ENCODE measurements at regions of chr7 and their contacts with region 1.

Region 1: GRCh38 chr7:992709-993607 is 10.0 kb downstream of the CYP2W1 start:
- DNase-seq: peak; percentile 87
- ATAC-seq: peak; percentile 91
- H3K4me3 ChIP-seq: no peak overlapping the region
- H3K27ac ChIP-seq: no peak overlapping the region
- H3K4me1 ChIP-seq: peaks cover 2 to 22% of the 10 kb centered on the region in 2 experiments; a peak in 2 of 4 replicates
- H3K27me3 ChIP-seq: no peaks in the 10 kb centered on the region
- CTCF ChIP-seq: peak; percentile 98 to 100 (median 99)
- POLR2A ChIP-seq: no peak
- RAD21 ChIP-seq: peak; percentile 99

Region 2: DNA sequence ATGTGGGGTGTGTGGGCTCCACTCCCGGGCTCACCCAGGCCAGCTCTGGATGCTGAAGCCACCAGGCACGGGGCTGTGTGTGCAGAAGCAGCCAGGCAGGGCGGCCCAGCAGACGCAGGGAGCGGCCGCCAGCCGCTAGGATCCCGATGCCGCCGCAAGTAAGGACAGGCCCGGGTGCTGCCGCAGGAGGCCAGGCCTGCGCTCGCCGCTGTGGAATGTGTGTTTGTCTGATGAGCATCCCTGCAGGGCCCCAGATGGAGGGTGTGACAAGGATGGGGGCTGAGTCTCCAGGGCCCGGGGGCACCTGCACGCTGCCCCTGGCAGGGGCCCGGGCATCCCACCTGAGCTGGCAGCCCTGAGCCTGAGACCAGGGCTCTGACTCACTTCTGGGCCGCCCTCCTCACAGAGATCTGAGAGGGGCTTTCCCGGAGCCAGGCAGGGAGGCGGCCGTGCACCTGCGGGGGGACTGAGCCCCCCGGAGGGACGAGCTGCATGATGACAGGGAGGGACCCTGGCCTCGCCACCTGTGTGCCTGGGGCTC is 601.5 kb before region 1 on chr7:
- CTCF ChIA-PET with region 1: no interaction called
- POLR2A ChIA-PET with region 1: no interaction called
- RAD21 ChIA-PET with region 1: no interaction called
- intact Hi-C with region 1: no loop called
- DNase-seq: no peak
- ATAC-seq: no peak
- H3K4me3 ChIP-seq: no peak overlapping the region
- H3K27ac ChIP-seq: no peak overlapping the region
- H3K4me1 ChIP-seq: no peaks in the 10 kb centered on the region
- H3K27me3 ChIP-seq: no peaks in the 10 kb centered on the region
- CTCF ChIP-seq: no peak
- POLR2A ChIP-seq: no peak
- RAD21 ChIP-seq: no peak

Region 3: GRCh38 chr7:974820-975681 is 17.9 kb before region 1 on chr7 and contains the start of gene COX19:
- CTCF ChIA-PET with region 1: interaction called, 12 read pairs
- POLR2A ChIA-PET with region 1: no interaction called
- RAD21 ChIA-PET with region 1: no interaction called
- intact Hi-C with region 1: no loop called
- DNase-seq: peak; percentile 67
- ATAC-seq: peak; percentile 90
- H3K4me3 ChIP-seq: peak within 1 kb of the TSS; percentile 97
- H3K27ac ChIP-seq: peak within 1 kb of the TSS; percentile 79
- H3K4me1 ChIP-seq: peaks cover 0 to 5% of the 10 kb centered on the region in 2 experiments; a peak in 2 of 4 replicates
- H3K27me3 ChIP-seq: no peaks in the 10 kb centered on the region
- CTCF ChIP-seq: no peak
- POLR2A ChIP-seq: no peak
- RAD21 ChIP-seq: no peak
- total RNA-seq, gene COX19: 14.0 TPM

Region 4: GRCh38 chr7:1065263-1066260 is 72.6 kb after region 1 on chr7:
- CTCF ChIA-PET with region 1: interaction called, 69 read pairs
- POLR2A ChIA-PET with region 1: no interaction called
- RAD21 ChIA-PET with region 1: interaction called, 11 read pairs
- intact Hi-C with region 1: loop called (anchors 1 kb)
- DNase-seq: no peak
- ATAC-seq: peak; percentile 98
- H3K4me3 ChIP-seq: no peak overlapping the region
- H3K27ac ChIP-seq: no peak overlapping the region; the same call in 1 of the 2 replicates
- H3K4me1 ChIP-seq: 0 out of 4 replicates have a peak, but pooled peaks cover 0 to 2% of the 10 kb centered on the region in 2 experiments
- H3K27me3 ChIP-seq: no peaks in the 10 kb centered on the region
- CTCF ChIP-seq: peak; percentile 78 to 98 (median 91)
- POLR2A ChIP-seq: no peak
- RAD21 ChIP-seq: peak; percentile 94

Region 5: DNA sequence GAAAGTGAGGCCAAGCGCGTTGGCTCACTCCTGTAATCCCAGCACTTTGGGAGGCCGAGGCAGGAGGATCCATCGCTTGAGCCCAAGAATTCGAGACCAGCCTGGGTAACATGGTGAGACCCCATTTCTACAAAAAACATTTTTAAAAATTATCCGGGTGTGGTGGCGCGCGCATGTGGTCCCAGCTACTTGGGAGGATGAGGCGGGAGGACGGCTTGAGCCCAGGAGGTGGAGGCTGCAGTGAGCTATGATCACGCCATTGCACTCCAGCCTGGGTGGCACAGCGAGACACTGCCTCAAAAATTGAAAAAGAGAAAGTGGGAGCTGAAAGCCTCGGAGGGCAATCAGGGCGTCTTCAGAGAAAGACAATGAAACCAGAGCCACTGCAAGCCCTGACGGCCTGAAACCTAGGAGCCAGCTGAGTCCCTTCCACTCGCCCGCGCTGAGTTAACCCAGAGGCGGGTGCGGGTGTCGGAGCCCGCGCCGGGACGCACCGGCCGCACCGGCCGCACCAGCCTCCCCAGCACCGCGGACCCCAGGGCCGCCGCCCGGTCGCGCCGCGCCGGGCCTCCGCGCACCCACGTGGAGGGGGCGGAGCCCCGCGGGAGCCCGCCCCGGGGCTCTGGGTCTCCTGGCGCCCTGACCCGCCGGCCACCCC is 144.7 kb after region 1 on chr7:
- CTCF ChIA-PET with region 1: interaction called, 5 read pairs
- POLR2A ChIA-PET with region 1: no interaction called
- RAD21 ChIA-PET with region 1: no interaction called
- intact Hi-C with region 1: loop called (anchors 5 kb)
- DNase-seq: no peak
- ATAC-seq: peak; percentile 74
- H3K4me3 ChIP-seq: peak overlapping the region; percentile 75 to 82
- H3K27ac ChIP-seq: peak overlapping the region; percentile 78
- H3K4me1 ChIP-seq: peaks cover 0 to 20% of the 10 kb centered on the region in 2 experiments; a peak in 2 of 4 replicates
- H3K27me3 ChIP-seq: no peaks in the 10 kb centered on the region
- CTCF ChIP-seq: no peak
- POLR2A ChIP-seq: no peak
- RAD21 ChIP-seq: no peak

Region 6: DNA sequence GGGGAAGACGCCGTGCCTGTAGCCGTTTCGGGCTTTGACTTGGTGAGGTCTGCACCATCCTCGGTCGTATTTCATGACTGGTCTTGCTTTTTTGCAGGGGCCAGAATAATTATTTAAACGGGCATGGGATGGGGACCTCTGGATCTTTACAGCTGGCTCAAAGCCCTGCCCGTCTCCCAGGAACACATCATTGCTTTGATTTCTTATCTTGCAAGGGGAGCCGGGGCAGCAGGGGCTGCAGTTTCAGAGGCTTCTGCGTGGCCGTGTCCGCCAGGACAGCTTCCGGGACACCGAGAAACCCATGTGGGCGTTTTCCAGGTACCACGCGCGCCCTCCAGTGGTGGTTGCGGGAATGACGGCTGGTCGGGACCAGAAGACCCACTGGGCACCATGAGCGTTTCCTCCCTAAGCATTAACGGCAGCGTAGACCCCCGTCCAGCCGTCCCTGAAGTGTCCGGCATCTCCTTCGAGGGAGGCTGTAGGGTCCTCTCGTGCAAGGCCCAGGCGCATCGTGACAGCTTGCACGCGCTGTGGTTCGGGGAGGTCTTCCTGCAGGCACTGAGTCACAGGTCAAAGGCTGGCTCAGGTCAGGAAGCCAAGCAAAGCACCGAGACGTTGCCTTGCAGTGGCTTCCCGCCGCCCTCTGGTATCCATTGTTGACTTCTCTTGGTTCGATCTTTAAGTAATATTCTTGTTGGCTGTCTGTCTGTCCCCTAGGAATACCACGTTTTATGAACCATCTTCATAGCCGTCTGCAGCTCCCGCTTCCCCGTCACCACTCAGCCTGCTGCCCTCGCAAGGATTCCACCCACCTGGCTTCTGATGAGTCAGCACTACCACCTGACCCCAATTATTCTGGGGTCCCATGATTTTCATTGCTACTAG is 183.3 kb after region 1 on chr7:
- CTCF ChIA-PET with region 1: interaction called, 31 read pairs
- POLR2A ChIA-PET with region 1: no interaction called
- RAD21 ChIA-PET with region 1: interaction called in 1 of 2 experiments, 8 read pairs
- intact Hi-C with region 1: loop called (anchors 1 kb)
- DNase-seq: peak; percentile 56
- ATAC-seq: peak; percentile 78
- H3K4me3 ChIP-seq: peak overlapping the region; percentile 39 to 56
- H3K27ac ChIP-seq: peak overlapping the region; percentile 41
- H3K4me1 ChIP-seq: peaks cover 10 to 18% of the 10 kb centered on the region in 2 experiments
- H3K27me3 ChIP-seq: no peaks in the 10 kb centered on the region
- CTCF ChIP-seq: peak; percentile 89 to 92 (median 92)
- POLR2A ChIP-seq: no peak
- RAD21 ChIP-seq: peak; percentile 81

Region 7: DNA sequence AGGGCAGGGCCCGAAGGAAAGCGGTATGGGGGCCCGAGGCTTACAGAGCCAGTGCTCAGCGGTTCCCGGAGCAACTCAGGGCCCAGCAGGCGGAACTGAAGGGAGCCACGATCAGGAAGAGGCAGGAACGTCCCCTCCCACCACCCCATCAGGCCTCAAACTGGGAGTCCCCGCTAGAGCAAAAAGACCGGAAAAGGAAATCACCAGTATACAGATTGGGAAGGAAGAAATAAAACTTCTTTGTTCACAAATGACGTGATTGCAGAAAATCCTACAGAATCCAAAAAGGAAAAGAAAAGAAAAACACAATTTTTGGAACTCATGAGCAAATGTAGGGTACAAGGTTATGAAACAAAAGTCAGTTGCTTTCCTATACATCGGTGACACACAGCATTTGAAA is 188.7 kb after region 1 on chr7:
- CTCF ChIA-PET with region 1: interaction called, 31 read pairs
- POLR2A ChIA-PET with region 1: no interaction called
- RAD21 ChIA-PET with region 1: interaction called in 1 of 2 experiments, 8 read pairs
- intact Hi-C with region 1: loop called (anchors 1 kb)
- DNase-seq: no peak
- ATAC-seq: no peak
- H3K4me3 ChIP-seq: no peak overlapping the region
- H3K27ac ChIP-seq: no peak overlapping the region
- H3K4me1 ChIP-seq: peaks cover 6 to 15% of the 10 kb centered on the region in 2 experiments
- H3K27me3 ChIP-seq: no peaks in the 10 kb centered on the region
- CTCF ChIP-seq: no peak
- POLR2A ChIP-seq: no peak
- RAD21 ChIP-seq: no peak

Measured in HCT116 (cell line).